ENCODE measurements at regions of chr11 and their contacts with region 1.

Region 1: DNA sequence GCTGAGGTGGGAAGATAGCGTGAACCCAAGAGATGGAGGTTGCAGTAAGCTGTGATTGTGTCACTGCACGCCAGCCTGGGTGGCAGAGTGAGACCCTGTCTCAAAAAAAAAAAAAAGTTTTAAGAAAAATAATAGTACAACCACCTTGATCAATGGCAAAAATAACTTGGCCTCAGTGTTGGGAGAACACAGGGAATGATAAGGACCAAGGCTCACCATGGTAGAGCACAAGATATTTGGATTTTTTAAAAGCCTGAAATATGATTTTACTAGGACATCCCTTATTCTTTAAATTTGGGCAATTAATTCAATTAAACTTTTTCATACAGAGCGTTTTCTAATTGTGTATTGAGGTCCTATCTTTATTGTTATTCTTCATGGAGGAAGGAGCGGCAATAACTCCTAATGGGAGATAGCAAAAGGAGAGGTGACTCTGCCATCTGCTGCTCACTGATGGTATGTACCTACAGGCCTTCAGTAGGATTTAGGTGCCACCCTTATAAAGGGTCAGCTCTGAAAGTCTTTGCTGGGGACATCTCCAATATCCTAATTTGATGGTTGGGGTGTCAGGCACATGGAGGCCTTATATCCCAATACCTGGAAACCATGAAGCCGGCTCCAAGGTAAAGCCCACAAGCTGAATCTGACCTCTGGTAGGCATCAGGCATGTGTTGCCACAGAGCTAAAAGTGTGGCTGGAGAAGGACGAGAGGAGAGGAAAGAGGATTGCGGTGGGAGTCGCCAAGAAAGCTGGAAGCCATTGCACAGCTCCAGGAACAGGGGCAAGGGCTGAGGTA is 21.9 kb upstream of the POLD3 start:
- DNase-seq: peak; percentile 50 to 65 (median 64)
- H3K4me3 ChIP-seq: no peak overlapping the region
- H3K4me3 Mint-ChIP-seq: no peak overlapping the region
- H3K27ac ChIP-seq: no peak overlapping the region
- H3K27ac Mint-ChIP-seq: peak overlapping the region in 2 of 7 donors; percentile 21 to 68
- H3K4me1 ChIP-seq: no peaks in the 10 kb centered on the region
- H3K4me1 Mint-ChIP-seq: no peaks in the 10 kb centered on the region
- H3K27me3 ChIP-seq: no peaks in the 10 kb centered on the region
- H3K27me3 Mint-ChIP-seq: peaks cover 2 to 6% (median 5%) of the 10 kb centered on the region in 3 donors
- CTCF ChIP-seq: peak; percentile 82

Region 2: GRCh38 chr11:74255741-74256369 is 314.6 kb before region 1 on chr11:
- intact Hi-C with region 1: loop called (anchors 10 kb)
- DNase-seq: peak; percentile 49 to 63 (median 60)
- H3K4me3 ChIP-seq: no peak overlapping the region
- H3K4me3 Mint-ChIP-seq: no peak overlapping the region
- H3K27ac ChIP-seq: no peak overlapping the region
- H3K27ac Mint-ChIP-seq: no peak overlapping the region
- H3K4me1 ChIP-seq: no peaks in the 10 kb centered on the region
- H3K4me1 Mint-ChIP-seq: peaks cover 5% of the 10 kb centered on the region
- H3K27me3 ChIP-seq: no peaks in the 10 kb centered on the region
- H3K27me3 Mint-ChIP-seq: peaks cover 0 to 1% (median 0%) of the 10 kb centered on the region in 3 donors
- CTCF ChIP-seq: peak; percentile 91

Region 3: DNA sequence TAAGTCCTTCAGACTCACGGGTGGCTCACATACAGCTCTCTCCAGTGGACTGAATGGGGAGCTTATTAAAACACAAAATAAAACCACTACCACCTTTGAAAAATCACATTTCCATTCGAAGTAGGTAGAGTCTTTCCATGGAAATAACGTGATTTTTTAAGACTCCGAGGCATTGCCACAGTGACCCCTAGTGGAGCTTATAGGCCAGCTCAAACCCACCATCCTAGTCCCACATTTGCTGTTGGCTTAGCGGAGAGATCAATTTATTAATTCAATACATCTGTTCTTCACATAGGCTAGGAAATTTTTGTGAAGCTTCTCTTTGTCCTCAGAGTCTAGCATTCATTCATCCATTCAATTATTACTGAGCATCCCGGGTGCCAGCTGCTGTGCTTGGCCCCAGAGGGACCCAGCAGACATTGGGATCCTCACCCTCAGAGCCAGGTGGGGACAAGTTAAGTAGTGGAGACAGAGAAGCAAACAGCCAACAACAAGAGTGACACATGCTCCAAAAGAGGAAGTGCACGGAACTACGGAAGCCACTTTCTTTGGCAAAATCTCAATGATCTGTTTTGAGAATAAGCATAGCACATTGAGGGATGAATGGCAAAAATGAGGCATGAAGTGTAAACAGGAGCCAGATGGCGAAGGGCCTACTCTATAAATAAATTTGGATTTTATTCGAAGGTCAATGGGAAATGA is 248.8 kb before region 1 on chr11:
- intact Hi-C with region 1: no loop called
- DNase-seq: peak; percentile 35 to 50 (median 43)
- H3K4me3 ChIP-seq: no peak overlapping the region
- H3K4me3 Mint-ChIP-seq: peak overlapping the region in 1 of 2 donors; percentile 4
- H3K27ac ChIP-seq: no peak overlapping the region
- H3K27ac Mint-ChIP-seq: no peak overlapping the region
- H3K4me1 ChIP-seq: peaks cover 0 to 8% of the 10 kb centered on the region in 2 donors
- H3K4me1 Mint-ChIP-seq: peaks cover 7% of the 10 kb centered on the region
- H3K27me3 ChIP-seq: no peaks in the 10 kb centered on the region
- H3K27me3 Mint-ChIP-seq: peaks cover 0 to 8% (median 1%) of the 10 kb centered on the region in 3 donors
- CTCF ChIP-seq: no peak

Region 4: DNA sequence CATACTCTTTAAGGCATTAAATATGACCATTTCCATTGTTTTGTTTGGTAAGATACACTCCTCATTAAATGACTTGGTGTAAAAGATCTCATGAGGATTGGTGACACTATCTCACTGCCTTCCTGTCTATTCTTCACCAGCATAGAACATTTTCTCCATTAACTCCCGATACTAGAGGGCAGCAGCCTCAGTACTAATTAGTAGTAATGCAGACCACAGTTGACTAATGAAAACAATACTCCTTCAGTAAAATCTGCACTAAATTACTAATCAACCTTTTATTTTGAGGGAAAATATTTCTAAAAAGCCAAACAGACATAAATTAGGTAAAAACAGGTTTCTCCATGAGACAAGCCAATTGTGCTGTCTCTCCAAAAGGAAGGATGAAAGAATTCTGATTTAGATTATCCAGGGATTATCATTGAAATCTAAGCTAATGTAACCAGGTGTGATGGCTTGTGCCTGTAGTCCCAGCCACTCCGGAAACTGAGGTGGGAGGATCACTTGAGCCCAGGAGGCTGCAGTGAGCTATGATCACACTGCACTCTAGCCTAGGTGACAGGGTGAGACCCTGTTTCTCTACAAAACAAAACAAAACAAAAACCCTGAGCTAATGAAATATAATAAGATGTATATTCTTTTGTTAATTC is 181.7 kb before region 1 on chr11:
- intact Hi-C with region 1: loop called (anchors 5 to 10 kb)
- DNase-seq: peak; percentile 33 to 74 (median 57)
- H3K4me3 ChIP-seq: no peak overlapping the region
- H3K4me3 Mint-ChIP-seq: no peak overlapping the region
- H3K27ac ChIP-seq: no peak overlapping the region
- H3K27ac Mint-ChIP-seq: peak overlapping the region in 1 of 7 donors; percentile 20
- H3K4me1 ChIP-seq: peaks cover 2 to 9% of the 10 kb centered on the region in 2 donors
- H3K4me1 Mint-ChIP-seq: peaks cover 14% of the 10 kb centered on the region
- H3K27me3 ChIP-seq: no peaks in the 10 kb centered on the region
- H3K27me3 Mint-ChIP-seq: no peaks in the 10 kb centered on the region
- CTCF ChIP-seq: peak; percentile 88

Region 5: GRCh38 chr11:74398244-74399159 is 172.0 kb before region 1 on chr11 and contains the start of gene PGM2L1:
- intact Hi-C with region 1: loop called (anchors 5 to 10 kb)
- DNase-seq: peak; percentile 82 to 88 (median 86)
- H3K4me3 ChIP-seq: peak within 1 kb of the TSS; percentile 59 to 94 (median 89)
- H3K4me3 Mint-ChIP-seq: peak within 1 kb of the TSS; percentile 100
- H3K27ac ChIP-seq: peak within 1 kb of the TSS; percentile 66 to 79
- H3K27ac Mint-ChIP-seq: peak within 1 kb of the TSS; percentile 94 to 100 (median 99)
- H3K4me1 ChIP-seq: peaks cover 10 to 13% of the 10 kb centered on the region in 2 donors
- H3K4me1 Mint-ChIP-seq: peaks cover 12% of the 10 kb centered on the region
- H3K27me3 ChIP-seq: no peaks in the 10 kb centered on the region
- H3K27me3 Mint-ChIP-seq: peaks cover 0 to 2% (median 0%) of the 10 kb centered on the region in 3 donors
- CTCF ChIP-seq: no peak
- polyA plus RNA-seq, gene PGM2L1: 0.25 to 0.81 (median 0.62) TPM

Region 6: DNA sequence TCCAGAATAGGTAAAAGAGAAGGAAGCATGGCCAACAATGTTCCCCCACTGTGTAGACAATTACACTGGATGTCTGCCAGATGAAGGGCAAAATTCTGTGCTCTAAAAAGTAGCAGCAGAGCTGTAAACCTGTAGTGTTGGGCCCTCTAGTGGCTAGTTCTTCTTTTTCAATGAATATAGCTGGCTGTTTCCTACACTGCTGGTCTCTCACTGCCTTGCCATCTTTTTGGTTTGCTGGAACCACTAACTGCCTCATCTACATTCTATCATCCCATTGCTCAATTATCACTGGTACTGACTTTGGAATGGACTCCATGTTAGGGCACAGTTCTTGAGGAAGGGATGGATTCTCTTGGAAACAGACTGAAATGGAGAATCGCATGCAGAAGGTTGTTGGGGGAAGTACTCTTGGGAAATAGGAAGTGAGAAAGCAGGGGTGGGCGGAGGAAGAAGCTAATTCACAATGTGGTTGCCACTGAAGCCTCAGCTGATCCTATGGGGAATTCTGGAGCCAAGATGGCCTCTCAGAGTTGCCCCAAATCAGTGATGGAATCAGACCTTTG is 121.0 kb before region 1 on chr11:
- intact Hi-C with region 1: loop called (anchors 1 to 2 kb)
- DNase-seq: peak; percentile 65 to 88 (median 84)
- H3K4me3 ChIP-seq: peak overlapping the region in 2 of 3 experiments; percentile 25 to 51
- H3K4me3 Mint-ChIP-seq: peak overlapping the region in 1 of 2 donors; percentile 87
- H3K27ac ChIP-seq: peak overlapping the region in 1 of 2 donors; percentile 57
- H3K27ac Mint-ChIP-seq: peak overlapping the region; percentile 38 to 91 (median 82)
- H3K4me1 ChIP-seq: peaks cover 13 to 18% of the 10 kb centered on the region in 2 donors
- H3K4me1 Mint-ChIP-seq: peaks cover 32% of the 10 kb centered on the region
- H3K27me3 ChIP-seq: no peaks in the 10 kb centered on the region
- H3K27me3 Mint-ChIP-seq: peaks cover 1 to 4% (median 4%) of the 10 kb centered on the region in 3 donors
- CTCF ChIP-seq: peak; percentile 85

Region 7: GRCh38 chr11:74773481-74773880 is 203.0 kb after region 1 on chr11:
- intact Hi-C with region 1: no loop called
- DNase-seq: no peak
- H3K4me3 ChIP-seq: no peak overlapping the region
- H3K4me3 Mint-ChIP-seq: no peak overlapping the region
- H3K27ac ChIP-seq: no peak overlapping the region
- H3K27ac Mint-ChIP-seq: no peak overlapping the region
- H3K4me1 ChIP-seq: peaks cover 18 to 28% of the 10 kb centered on the region in 2 donors
- H3K4me1 Mint-ChIP-seq: peaks cover 41% of the 10 kb centered on the region
- H3K27me3 ChIP-seq: no peaks in the 10 kb centered on the region
- H3K27me3 Mint-ChIP-seq: no peaks in the 10 kb centered on the region
- CTCF ChIP-seq: no peak

Measured in CD14-positive monocyte (primary cell).